ENCODE measurements at regions of chr1 and their contacts with region 1.

Region 1: DNA sequence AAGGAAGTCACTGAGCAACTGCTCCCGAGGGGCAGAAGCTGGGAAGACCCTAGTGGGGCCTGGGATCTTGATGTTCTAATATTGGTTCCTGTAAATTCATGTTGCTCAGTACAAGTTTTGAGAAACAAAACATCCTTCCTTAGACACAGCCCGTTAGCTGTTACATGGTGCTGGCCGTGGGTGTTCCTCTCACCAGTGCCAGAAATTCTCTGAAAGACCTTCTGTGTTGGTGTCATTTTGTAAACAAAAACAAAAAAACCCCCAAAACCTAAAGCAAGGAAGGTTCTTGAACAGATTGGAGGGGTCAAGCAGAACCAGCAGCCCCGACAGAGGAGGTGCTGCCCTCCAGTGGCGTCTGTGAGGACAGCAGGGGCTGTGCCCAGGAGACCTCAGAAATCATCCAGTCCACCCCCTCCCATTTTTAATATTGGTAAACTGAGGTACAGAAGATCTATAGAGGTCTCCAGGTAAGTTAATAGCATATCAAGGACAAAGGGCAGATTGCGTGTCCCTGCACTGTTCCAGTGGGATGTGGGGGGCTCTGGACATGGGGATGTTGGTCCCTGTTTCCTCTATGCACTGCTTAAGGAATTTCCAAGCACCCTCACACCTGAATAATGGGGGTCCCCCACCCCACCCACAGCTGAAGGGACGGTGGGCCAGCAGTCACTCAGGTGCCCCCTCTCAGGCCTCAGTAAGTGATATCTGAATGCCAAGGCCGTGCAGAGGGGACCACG is 38.2 kb downstream of the SLC2A7 start:
- DNase-seq: peak in 8 of 9 experiments; percentile 47 to 84 (median 70)
- ATAC-seq: peak; percentile 67
- H3K4me3 ChIP-seq: peak overlapping the region in 1 of 2 experiments; percentile 24
- H3K4me3 Mint-ChIP-seq: peak overlapping the region; percentile 67
- H3K27ac ChIP-seq: no peak overlapping the region
- H3K27ac Mint-ChIP-seq: peak overlapping the region; percentile 92
- H3K4me1 ChIP-seq: peaks cover 37% of the 10 kb centered on the region
- H3K4me1 Mint-ChIP-seq: peaks cover 30% of the 10 kb centered on the region
- H3K27me3 ChIP-seq: no peaks in the 10 kb centered on the region
- H3K27me3 Mint-ChIP-seq: no peaks in the 10 kb centered on the region
- CTCF ChIP-seq: peak; percentile 99

Region 2: GRCh38 chr1:8858888-8859706 is 129.0 kb before region 1 on chr1:
- CTCF ChIA-PET with region 1: interaction called, 32 read pairs
- POLR2A ChIA-PET with region 1: interaction called, 3 read pairs
- intact Hi-C with region 1: loop called in 1 of 2 experiments (anchors 1 kb)
- DNase-seq: peak in 7 of 9 experiments; percentile 37 to 76 (median 59)
- ATAC-seq: peak; percentile 79
- H3K4me3 ChIP-seq: no peak overlapping the region
- H3K4me3 Mint-ChIP-seq: no peak overlapping the region
- H3K27ac ChIP-seq: peak overlapping the region in 1 of 2 experiments; percentile 31
- H3K27ac Mint-ChIP-seq: peak overlapping the region; percentile 77
- H3K4me1 ChIP-seq: no peaks in the 10 kb centered on the region
- H3K4me1 Mint-ChIP-seq: peaks cover 15% of the 10 kb centered on the region
- H3K27me3 ChIP-seq: no peaks in the 10 kb centered on the region
- H3K27me3 Mint-ChIP-seq: no peaks in the 10 kb centered on the region
- CTCF ChIP-seq: peak; percentile 65

Region 3: DNA sequence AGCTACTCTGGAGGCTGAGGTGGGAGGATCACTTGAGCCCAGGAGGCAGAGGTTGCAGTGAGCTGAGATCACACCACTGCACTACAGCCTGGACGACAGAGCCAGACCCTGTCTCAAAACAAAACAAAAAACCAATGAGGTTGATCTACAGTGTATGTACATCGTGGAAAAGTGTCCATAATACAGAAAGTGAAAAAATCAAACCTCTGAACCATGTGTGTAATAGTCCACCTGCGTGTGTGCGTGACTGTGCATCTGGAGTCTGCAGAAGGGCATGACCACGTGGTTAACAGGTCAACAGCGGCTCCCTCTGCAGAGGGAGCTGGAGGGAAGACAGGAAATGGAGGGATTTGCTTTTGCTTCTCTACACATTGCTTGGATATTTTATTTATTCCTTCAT is 77.1 kb before region 1 on chr1:
- CTCF ChIA-PET with region 1: interaction called, 226 read pairs
- POLR2A ChIA-PET with region 1: interaction called, 13 read pairs
- intact Hi-C with region 1: no loop called
- DNase-seq: no peak
- ATAC-seq: no peak
- H3K4me3 ChIP-seq: no peak overlapping the region
- H3K4me3 Mint-ChIP-seq: no peak overlapping the region
- H3K27ac ChIP-seq: no peak overlapping the region
- H3K27ac Mint-ChIP-seq: peak overlapping the region; percentile 78
- H3K4me1 ChIP-seq: peaks cover 32% of the 10 kb centered on the region
- H3K4me1 Mint-ChIP-seq: peaks cover 39% of the 10 kb centered on the region
- H3K27me3 ChIP-seq: peaks cover 0 to 2% of the 10 kb centered on the region in 2 experiments
- H3K27me3 Mint-ChIP-seq: no peaks in the 10 kb centered on the region
- CTCF ChIP-seq: no peak

Region 4: GRCh38 chr1:8925406-8925805 is 62.6 kb before region 1 on chr1:
- CTCF ChIA-PET with region 1: interaction called, 226 read pairs
- POLR2A ChIA-PET with region 1: interaction called, 40 read pairs
- intact Hi-C with region 1: no loop called
- DNase-seq: no peak
- ATAC-seq: no peak
- H3K4me3 ChIP-seq: peak overlapping the region; percentile 57 to 77
- H3K4me3 Mint-ChIP-seq: no peak overlapping the region
- H3K27ac ChIP-seq: peak overlapping the region; percentile 37 to 78
- H3K27ac Mint-ChIP-seq: no peak overlapping the region
- H3K4me1 ChIP-seq: peaks cover 26% of the 10 kb centered on the region
- H3K4me1 Mint-ChIP-seq: peaks cover 30% of the 10 kb centered on the region
- H3K27me3 ChIP-seq: no peaks in the 10 kb centered on the region
- H3K27me3 Mint-ChIP-seq: no peaks in the 10 kb centered on the region
- CTCF ChIP-seq: no peak

Region 5: GRCh38 chr1:8962812-8963530 is 25.1 kb before region 1 on chr1:
- CTCF ChIA-PET with region 1: interaction called, 70 read pairs
- POLR2A ChIA-PET with region 1: interaction called, 3 read pairs
- intact Hi-C with region 1: loop called in 1 of 2 experiments (anchors 1 kb)
- DNase-seq: peak in 8 of 9 experiments; percentile 30 to 66 (median 46)
- ATAC-seq: peak; percentile 42
- H3K4me3 ChIP-seq: peak overlapping the region in 1 of 2 experiments; percentile 31
- H3K4me3 Mint-ChIP-seq: peak overlapping the region; percentile 64
- H3K27ac ChIP-seq: peak overlapping the region in 1 of 2 experiments; percentile 35
- H3K27ac Mint-ChIP-seq: peak overlapping the region; percentile 80
- H3K4me1 ChIP-seq: peaks cover 74% of the 10 kb centered on the region
- H3K4me1 Mint-ChIP-seq: peaks cover 73% of the 10 kb centered on the region
- H3K27me3 ChIP-seq: no peaks in the 10 kb centered on the region
- H3K27me3 Mint-ChIP-seq: no peaks in the 10 kb centered on the region
- CTCF ChIP-seq: peak; percentile 31

Region 6: DNA sequence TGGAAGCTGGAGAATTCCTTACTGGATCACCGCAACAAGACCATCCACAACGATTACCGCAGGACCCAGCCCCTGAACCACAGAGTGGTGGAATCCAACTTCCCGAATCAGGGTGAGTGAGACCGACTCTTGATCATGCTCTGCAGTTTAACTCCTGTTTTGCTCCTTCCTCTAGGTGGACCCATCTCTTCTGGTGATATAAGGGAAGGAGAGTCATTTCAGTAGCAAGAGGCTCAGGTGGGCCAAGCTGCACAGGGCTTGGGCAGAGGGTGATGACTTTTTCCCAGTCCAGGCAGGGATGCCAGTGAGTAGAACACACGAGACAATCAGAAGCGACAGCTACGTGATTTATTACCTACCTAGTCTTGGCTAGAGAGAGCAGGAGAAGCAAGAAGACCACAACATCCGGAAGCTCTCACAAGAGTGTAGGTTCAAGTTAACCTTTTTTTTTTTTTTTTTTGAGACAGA is 17.1 kb before region 1 on chr1:
- CTCF ChIA-PET with region 1: interaction called, 31 read pairs
- POLR2A ChIA-PET with region 1: interaction called, 14 read pairs
- intact Hi-C with region 1: loop called (anchors 1 kb)
- DNase-seq: peak in 7 of 9 experiments; percentile 17 to 82 (median 62)
- ATAC-seq: peak; percentile 79
- H3K4me3 ChIP-seq: peak overlapping the region; percentile 62 to 77
- H3K4me3 Mint-ChIP-seq: peak overlapping the region; percentile 100
- H3K27ac ChIP-seq: peak overlapping the region; percentile 45 to 81
- H3K27ac Mint-ChIP-seq: peak overlapping the region; percentile 100
- H3K4me1 ChIP-seq: peaks cover 22% of the 10 kb centered on the region
- H3K4me1 Mint-ChIP-seq: peaks cover 41% of the 10 kb centered on the region
- H3K27me3 ChIP-seq: peaks cover 0 to 3% of the 10 kb centered on the region in 2 experiments
- H3K27me3 Mint-ChIP-seq: no peaks in the 10 kb centered on the region
- CTCF ChIP-seq: no peak

Region 7: GRCh38 chr1:8976896-8977450 is 11.1 kb before region 1 on chr1:
- CTCF ChIA-PET with region 1: interaction called, 31 read pairs
- POLR2A ChIA-PET with region 1: no interaction called
- intact Hi-C with region 1: no loop called
- DNase-seq: no peak
- ATAC-seq: no peak
- H3K4me3 ChIP-seq: no peak overlapping the region
- H3K4me3 Mint-ChIP-seq: no peak overlapping the region
- H3K27ac ChIP-seq: no peak overlapping the region
- H3K27ac Mint-ChIP-seq: no peak overlapping the region
- H3K4me1 ChIP-seq: peaks cover 4% of the 10 kb centered on the region
- H3K4me1 Mint-ChIP-seq: peaks cover 10% of the 10 kb centered on the region
- H3K27me3 ChIP-seq: no peaks in the 10 kb centered on the region
- H3K27me3 Mint-ChIP-seq: no peaks in the 10 kb centered on the region
- CTCF ChIP-seq: no peak